ENCODE measurements at regions of chr15 and their contacts with region 1.

Region 1: GRCh38 chr15:65558336-65558735 is 28.1 kb downstream of the HACD3 start:
- DNase-seq: no peak
- H3K4me3 ChIP-seq: no peak overlapping the region
- H3K27ac ChIP-seq: no peak overlapping the region
- H3K4me1 ChIP-seq: no peaks in the 10 kb centered on the region
- H3K27me3 ChIP-seq: no peaks in the 10 kb centered on the region
- CTCF ChIP-seq: no peak

Region 2: GRCh38 chr15:65494071-65494470 is 64.3 kb before region 1 on chr15:
- CTCF ChIA-PET with region 1: interaction called, 13 read pairs
- dilution Hi-C with region 1: no loop called
- in situ Hi-C with region 1: no loop called
- intact Hi-C with region 1: no loop called
- DNase-seq: no peak
- H3K4me3 ChIP-seq: no peak overlapping the region
- H3K27ac ChIP-seq: no peak overlapping the region
- H3K4me1 ChIP-seq: no peaks in the 10 kb centered on the region
- H3K27me3 ChIP-seq: no peaks in the 10 kb centered on the region
- CTCF ChIP-seq: no peak

Region 3: GRCh38 chr15:65512189-65512588 is 46.1 kb before region 1 on chr15:
- CTCF ChIA-PET with region 1: interaction called, 8 read pairs
- dilution Hi-C with region 1: no loop called
- in situ Hi-C with region 1: loop called in 1 of 2 experiments (anchors 10 kb)
- intact Hi-C with region 1: no loop called
- DNase-seq: no peak
- H3K4me3 ChIP-seq: no peak overlapping the region
- H3K27ac ChIP-seq: no peak overlapping the region
- H3K4me1 ChIP-seq: peaks cover 10% of the 10 kb centered on the region
- H3K27me3 ChIP-seq: no peaks in the 10 kb centered on the region
- CTCF ChIP-seq: no peak